Sigmoid colon (tissue), 7 donors: ENCODE measurements at regions of chr20 and their contacts with region 1.

Region 1: DNA sequence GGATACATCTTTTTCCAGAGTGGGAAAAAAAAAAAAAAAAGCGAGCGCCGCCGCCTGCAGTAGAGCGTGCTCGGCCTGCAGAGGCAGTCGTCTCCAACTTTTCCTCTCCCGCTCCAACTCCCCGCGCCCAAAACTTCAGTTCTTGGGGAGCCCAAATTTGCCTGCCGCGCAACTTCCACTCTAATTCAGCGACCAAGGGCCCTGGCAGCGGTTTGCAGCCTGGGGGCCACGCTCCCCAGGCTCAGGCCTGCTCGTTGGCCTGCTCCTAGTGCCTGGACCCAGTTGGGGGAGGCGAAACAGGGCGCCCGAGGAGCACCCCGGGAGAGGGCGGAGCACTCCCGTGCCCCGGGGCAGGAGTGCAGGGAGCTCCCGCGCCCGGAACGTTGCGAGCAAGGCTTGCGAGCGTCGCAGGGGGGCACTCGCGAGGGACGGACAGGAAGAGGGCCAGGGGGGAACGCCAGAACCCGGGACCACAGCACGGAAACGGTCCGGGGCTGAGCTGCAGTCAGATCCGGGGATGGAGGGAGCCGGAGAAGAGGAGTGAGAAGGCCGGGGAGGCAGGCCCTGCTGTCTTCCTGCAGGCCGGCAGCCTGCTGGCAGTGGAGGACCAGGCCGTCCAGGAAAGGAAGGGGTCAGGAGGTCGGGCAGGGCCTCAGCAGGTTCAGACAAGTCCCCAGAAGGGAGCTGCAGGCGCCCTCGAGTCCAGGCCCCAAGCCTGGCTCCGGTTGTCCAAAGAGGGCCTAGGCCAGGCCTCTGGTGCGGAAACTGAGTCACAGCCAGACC is at the start of gene STX16:
- DNase-seq: peak; percentile 95
- H3K4me3 ChIP-seq: peak within 1 kb of the TSS; percentile 71 to 91 (median 85)
- H3K27ac ChIP-seq: peak within 1 kb of the TSS; percentile 93 to 96 (median 96)
- H3K4me1 ChIP-seq: peaks cover 0 to 74% (median 60%) of the 10 kb centered on the region in 4 donors
- H3K27me3 ChIP-seq: no peaks in the 10 kb centered on the region
- CTCF ChIP-seq: peak; percentile 40 to 65 (median 60)
- EP300 ChIP-seq: no peak
- POLR2A ChIP-seq: peak; percentile 63 to 66
- total RNA-seq, gene STX16: 42.8 to 126 (median 57.1) TPM

Region 2: DNA sequence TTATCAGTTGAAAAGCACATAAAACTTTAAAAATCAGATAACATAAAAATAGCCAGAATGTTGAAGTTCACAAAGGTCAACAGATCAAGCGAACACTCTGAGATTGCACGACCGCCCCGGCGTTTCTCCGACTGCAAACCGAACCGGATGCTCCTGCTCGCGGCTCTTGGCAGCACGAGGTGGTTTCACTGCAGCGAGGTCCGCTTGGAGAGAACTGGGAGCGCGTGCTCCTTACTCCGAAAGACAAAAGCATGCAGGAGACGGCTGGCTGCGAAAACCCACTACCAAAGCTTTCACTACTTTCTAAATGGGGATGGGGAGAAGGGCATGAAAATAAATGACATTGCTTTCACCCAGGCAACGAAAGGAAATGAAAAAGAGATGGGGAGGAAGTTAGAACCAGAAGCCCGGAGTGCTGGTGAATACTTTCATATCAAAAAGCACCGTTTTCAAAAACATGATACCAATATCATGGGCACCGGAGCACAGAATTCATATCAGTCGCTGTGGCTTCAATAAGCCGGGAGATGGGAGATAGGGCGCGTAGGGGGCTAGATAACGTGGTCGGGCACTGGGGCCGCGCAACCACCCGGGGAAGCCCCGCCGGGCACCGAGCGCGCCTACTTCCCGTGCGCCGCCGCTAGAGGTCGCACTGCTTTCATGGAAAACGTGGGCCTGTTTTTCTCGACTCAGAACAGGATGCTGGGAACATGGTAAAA is 414.2 kb before region 1 on chr20:
- intact Hi-C with region 1: loop called (anchors 2 kb)
- DNase-seq: peak; percentile 77
- H3K4me3 ChIP-seq: peak overlapping the region; percentile 15 to 51 (median 40)
- H3K27ac ChIP-seq: peak overlapping the region in 3 of 4 donors; percentile 10 to 38 (median 11)
- H3K4me1 ChIP-seq: peaks cover 0 to 11% (median 3%) of the 10 kb centered on the region in 4 donors
- H3K27me3 ChIP-seq: no peaks in the 10 kb centered on the region
- CTCF ChIP-seq: peak; percentile 81 to 95 (median 91)
- EP300 ChIP-seq: no peak
- POLR2A ChIP-seq: no peak

Region 3: GRCh38 chr20:58327211-58327610 is 323.8 kb before region 1 on chr20:
- intact Hi-C with region 1: no loop called
- DNase-seq: peak; percentile 80
- H3K4me3 ChIP-seq: no peak overlapping the region
- H3K27ac ChIP-seq: peak overlapping the region in 1 of 4 donors; percentile 9
- H3K4me1 ChIP-seq: peaks cover 0 to 55% (median 32%) of the 10 kb centered on the region in 4 donors
- H3K27me3 ChIP-seq: no peaks in the 10 kb centered on the region
- CTCF ChIP-seq: no peak
- EP300 ChIP-seq: no peak
- POLR2A ChIP-seq: no peak

Region 4: GRCh38 chr20:58361481-58362205 is 289.3 kb before region 1 on chr20:
- intact Hi-C with region 1: loop called (anchors 10 kb)
- DNase-seq: no peak
- H3K4me3 ChIP-seq: no peak overlapping the region
- H3K27ac ChIP-seq: peak overlapping the region in 2 of 4 donors; percentile 9 to 44
- H3K4me1 ChIP-seq: peaks cover 0 to 38% (median 26%) of the 10 kb centered on the region in 4 donors
- H3K27me3 ChIP-seq: no peaks in the 10 kb centered on the region
- CTCF ChIP-seq: no peak
- EP300 ChIP-seq: no peak
- POLR2A ChIP-seq: no peak

Region 5: DNA sequence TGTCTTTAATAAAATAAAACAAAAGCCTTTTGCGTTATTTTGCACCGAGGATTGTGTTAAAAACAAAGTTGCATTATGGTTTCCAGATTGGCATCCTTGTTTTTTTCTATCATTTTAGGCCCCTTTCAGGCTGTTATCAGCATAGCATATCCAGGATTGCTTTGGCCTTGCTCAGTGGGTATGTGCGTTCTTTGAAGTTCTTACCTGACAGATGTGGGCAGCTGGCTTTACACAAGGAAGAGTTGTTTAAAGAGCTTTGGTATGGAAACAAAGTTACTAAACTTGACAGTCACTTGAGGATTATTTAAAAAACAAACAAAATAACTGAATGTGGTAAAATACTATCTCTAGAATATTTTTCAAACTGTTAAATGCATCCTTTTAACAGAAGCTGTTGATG is 255.4 kb before region 1 on chr20:
- intact Hi-C with region 1: no loop called
- DNase-seq: no peak
- H3K4me3 ChIP-seq: no peak overlapping the region
- H3K27ac ChIP-seq: no peak overlapping the region
- H3K4me1 ChIP-seq: peaks cover 0 to 79% (median 55%) of the 10 kb centered on the region in 4 donors
- H3K27me3 ChIP-seq: no peaks in the 10 kb centered on the region
- CTCF ChIP-seq: no peak
- EP300 ChIP-seq: no peak
- POLR2A ChIP-seq: no peak

Region 6: DNA sequence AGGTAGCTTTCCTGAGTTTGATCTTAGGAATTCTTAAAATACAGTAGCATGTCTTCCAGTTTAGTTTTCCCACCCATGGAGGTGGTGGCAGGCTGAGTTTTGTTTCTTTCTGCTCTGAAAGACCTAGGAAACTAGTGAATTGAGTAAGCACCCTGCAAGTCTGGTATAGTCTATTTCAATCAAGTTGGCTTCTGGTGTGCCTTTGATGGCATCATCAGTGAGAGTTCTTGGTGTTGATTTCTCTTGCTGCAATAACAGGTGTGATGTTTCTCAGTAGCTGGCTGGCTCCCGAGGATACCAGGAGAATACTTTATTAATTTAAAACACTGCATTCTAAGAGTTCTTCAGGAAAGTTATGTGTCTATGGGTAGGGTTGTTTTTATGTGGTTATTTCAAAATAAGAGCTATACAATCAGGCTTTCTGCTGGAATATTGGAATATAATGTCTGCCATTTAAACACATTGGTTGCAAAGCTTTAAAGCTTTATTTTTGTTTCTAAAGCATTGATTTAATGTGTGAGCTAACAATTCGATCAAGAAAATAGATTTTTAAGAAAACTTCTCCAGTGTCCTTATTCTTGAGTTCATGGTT is 242.9 kb before region 1 on chr20:
- intact Hi-C with region 1: no loop called
- DNase-seq: no peak
- H3K4me3 ChIP-seq: no peak overlapping the region
- H3K27ac ChIP-seq: peak overlapping the region in 2 of 4 donors; percentile 29 to 42
- H3K4me1 ChIP-seq: peaks cover 0 to 54% (median 42%) of the 10 kb centered on the region in 4 donors
- H3K27me3 ChIP-seq: no peaks in the 10 kb centered on the region
- CTCF ChIP-seq: no peak
- EP300 ChIP-seq: no peak
- POLR2A ChIP-seq: no peak

Region 7: DNA sequence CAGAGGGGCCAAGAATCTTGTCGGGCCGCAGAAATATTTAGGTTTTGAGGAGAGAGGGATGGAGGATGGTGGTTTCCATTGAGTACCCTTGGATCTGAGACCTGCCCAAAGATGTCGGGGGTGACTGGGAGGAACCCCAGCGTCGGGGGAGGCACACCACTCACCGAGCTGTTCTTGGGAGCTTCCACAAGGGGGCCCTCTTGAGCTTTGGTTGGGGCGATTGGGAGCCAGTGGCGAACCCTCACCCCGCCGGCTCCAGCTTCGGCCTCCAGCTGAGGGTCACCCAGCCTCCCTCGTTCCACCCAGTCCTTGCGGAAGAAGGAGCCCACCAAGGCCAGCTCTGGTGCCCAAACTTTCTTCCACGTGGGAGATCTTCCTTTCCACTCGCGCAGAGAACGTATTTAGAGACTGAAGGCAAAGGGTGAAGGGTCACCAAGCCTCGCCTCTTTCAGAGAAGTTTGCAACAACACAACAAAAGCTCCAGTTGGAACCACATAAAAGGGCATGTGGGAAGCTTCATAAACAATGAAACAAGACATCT is 169.4 kb before region 1 on chr20:
- intact Hi-C with region 1: loop called (anchors 2 kb)
- DNase-seq: no peak
- H3K4me3 ChIP-seq: no peak overlapping the region
- H3K27ac ChIP-seq: peak overlapping the region in 3 of 4 donors; percentile 77 to 81 (median 78)
- H3K4me1 ChIP-seq: peaks cover 0 to 23% (median 22%) of the 10 kb centered on the region in 4 donors
- H3K27me3 ChIP-seq: no peaks in the 10 kb centered on the region
- CTCF ChIP-seq: peak; percentile 42 to 69 (median 60)
- EP300 ChIP-seq: no peak
- POLR2A ChIP-seq: no peak

Region 8: GRCh38 chr20:58598211-58599014 is 52.6 kb before region 1 on chr20:
- intact Hi-C with region 1: loop called (anchors 5 kb)
- DNase-seq: peak; percentile 89
- H3K4me3 ChIP-seq: no peak overlapping the region
- H3K27ac ChIP-seq: peak overlapping the region; percentile 82 to 87 (median 85)
- H3K4me1 ChIP-seq: peaks cover 0 to 88% (median 68%) of the 10 kb centered on the region in 4 donors
- H3K27me3 ChIP-seq: no peaks in the 10 kb centered on the region
- CTCF ChIP-seq: no peak
- EP300 ChIP-seq: no peak
- POLR2A ChIP-seq: no peak

Region 9: DNA sequence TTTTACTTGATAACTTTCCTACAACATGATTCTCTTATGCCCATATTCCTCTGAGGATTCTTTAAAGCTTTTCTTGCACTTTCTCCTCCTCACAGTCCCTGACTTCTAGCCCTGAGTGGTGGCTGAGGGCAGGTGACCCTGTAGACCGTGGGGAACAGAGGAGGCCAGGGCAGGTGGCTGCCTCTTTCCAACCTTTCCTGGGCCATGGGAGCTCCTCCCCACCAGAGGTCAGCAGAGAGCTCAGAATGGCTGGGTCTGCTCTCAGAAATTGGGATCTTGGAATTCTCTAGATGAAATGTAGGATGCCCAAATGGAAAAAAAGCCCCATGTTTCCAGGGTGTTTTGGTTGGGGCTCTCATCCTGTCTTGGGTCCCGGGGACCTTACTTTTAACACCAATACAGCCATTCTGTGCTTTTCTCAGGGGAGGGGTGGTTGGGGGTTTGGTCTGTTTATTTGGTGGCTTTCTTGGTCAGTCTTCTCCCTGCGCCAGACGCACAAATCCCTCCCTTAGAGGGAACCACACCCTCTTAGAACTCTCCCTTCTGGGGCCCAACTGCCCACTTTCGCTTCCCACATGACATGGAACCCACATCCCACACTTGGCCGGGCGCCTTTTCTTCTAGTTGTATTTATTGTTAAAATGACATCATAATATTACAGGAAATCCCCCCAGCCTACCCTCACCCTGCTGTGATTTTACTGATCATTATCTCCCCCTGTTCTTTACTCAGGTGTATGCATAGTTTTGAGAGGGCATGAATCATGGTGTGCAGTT is 219.5 kb after region 1 on chr20:
- intact Hi-C with region 1: loop called (anchors 10 kb)
- DNase-seq: peak; percentile 84
- H3K4me3 ChIP-seq: no peak overlapping the region
- H3K27ac ChIP-seq: no peak overlapping the region
- H3K4me1 ChIP-seq: no peaks in the 10 kb centered on the region
- H3K27me3 ChIP-seq: no peaks in the 10 kb centered on the region
- CTCF ChIP-seq: peak; percentile 71 to 88 (median 83)
- EP300 ChIP-seq: no peak
- POLR2A ChIP-seq: no peak